ENCODE measurements at regions of chr11 and their contacts with region 1.

Region 1: DNA sequence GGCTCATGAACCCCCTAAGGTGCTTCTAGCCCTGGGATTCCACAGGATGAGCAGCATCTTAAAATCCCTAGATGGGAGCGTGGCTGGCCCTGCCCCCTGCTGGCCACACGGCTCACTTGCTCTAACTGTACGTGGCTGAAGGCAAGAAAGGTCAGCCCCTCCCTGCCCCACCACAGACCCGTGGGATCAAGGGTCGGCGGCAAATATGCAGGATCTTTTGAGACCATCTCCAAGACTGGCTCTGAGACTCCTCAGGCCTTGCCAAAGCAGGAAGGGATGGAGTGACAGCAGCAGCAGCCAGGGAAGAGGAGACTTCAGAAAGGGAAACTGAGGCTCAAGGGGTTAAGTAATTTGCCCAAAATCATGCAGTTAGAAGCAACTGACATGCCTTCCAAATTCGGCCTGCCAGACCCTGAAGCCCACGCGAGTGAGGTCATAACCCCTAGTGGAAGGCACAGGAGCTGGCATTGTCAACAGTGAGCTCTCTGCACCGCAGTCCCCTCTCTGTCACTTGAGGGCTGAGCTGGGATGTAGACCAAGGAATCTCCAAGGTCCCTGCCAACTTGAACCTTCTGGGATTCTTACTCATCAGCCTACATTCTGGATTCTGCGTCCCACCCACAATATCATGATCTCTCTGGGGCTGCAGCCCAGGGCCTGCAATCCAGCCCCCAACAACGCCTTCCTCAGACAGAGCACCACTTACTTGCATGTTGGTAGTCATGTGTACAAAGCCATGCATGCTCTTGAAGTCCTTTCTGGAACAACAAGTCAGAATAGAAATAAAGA is 31.4 kb downstream of the CREB3L1 start:
- DNase-seq: peak; percentile 76
- H3K4me3 Mint-ChIP-seq: no peak overlapping the region
- H3K27ac Mint-ChIP-seq: no peak overlapping the region
- H3K4me1 Mint-ChIP-seq: peaks cover 15% of the 10 kb centered on the region
- H3K27me3 Mint-ChIP-seq: peaks cover 14% of the 10 kb centered on the region
- CTCF ChIP-seq: peak; percentile 86

Region 2: GRCh38 chr11:46176402-46176801 is 132.4 kb before region 1 on chr11:
- CTCF ChIA-PET with region 1: no interaction called
- intact Hi-C with region 1: no loop called
- DNase-seq: peak; percentile 35
- H3K4me3 Mint-ChIP-seq: no peak overlapping the region
- H3K27ac Mint-ChIP-seq: no peak overlapping the region
- H3K4me1 Mint-ChIP-seq: peaks cover 16% of the 10 kb centered on the region
- H3K27me3 Mint-ChIP-seq: peaks cover 90% of the 10 kb centered on the region
- CTCF ChIP-seq: no peak

Region 3: GRCh38 chr11:46247664-46248063 is 61.2 kb before region 1 on chr11:
- CTCF ChIA-PET with region 1: interaction called, 12 read pairs
- intact Hi-C with region 1: loop called (anchors 2 kb)
- DNase-seq: peak; percentile 70
- H3K4me3 Mint-ChIP-seq: no peak overlapping the region
- H3K27ac Mint-ChIP-seq: no peak overlapping the region
- H3K4me1 Mint-ChIP-seq: peaks cover 39% of the 10 kb centered on the region
- H3K27me3 Mint-ChIP-seq: peaks cover 16% of the 10 kb centered on the region
- CTCF ChIP-seq: peak; percentile 17

Region 4: GRCh38 chr11:46367244-46367915 is 58.6 kb after region 1 on chr11:
- CTCF ChIA-PET with region 1: no interaction called
- intact Hi-C with region 1: no loop called
- DNase-seq: peak; percentile 72
- H3K4me3 Mint-ChIP-seq: no peak overlapping the region
- H3K27ac Mint-ChIP-seq: no peak overlapping the region
- H3K4me1 Mint-ChIP-seq: peaks cover 27% of the 10 kb centered on the region
- H3K27me3 Mint-ChIP-seq: no peaks in the 10 kb centered on the region
- CTCF ChIP-seq: peak; percentile 89

Region 5: GRCh38 chr11:47176328-47177228 is 867.8 kb after region 1 on chr11 and contains the start of gene ARFGAP2:
- CTCF ChIA-PET with region 1: no interaction called
- intact Hi-C with region 1: no loop called
- DNase-seq: peak; percentile 99
- H3K4me3 Mint-ChIP-seq: peak within 1 kb of the TSS; percentile 98
- H3K27ac Mint-ChIP-seq: peak within 1 kb of the TSS; percentile 99
- H3K4me1 Mint-ChIP-seq: peaks cover 23% of the 10 kb centered on the region
- H3K27me3 Mint-ChIP-seq: no peaks in the 10 kb centered on the region
- CTCF ChIP-seq: no peak
- total RNA-seq, gene ARFGAP2: 108 and 121 TPM in 2 replicates

Measured in Calu3 (cell line).